ENCODE measurements at regions of chr17 and their contacts with region 1.

Region 1: GRCh38 chr17:64129764-64130558 is at the start of gene ERN1:
- DNase-seq: peak; percentile 93
- ATAC-seq: peak; percentile 94
- H3K4me3 Mint-ChIP-seq: peak within 1 kb of the TSS; percentile 92
- H3K27ac Mint-ChIP-seq: peak within 1 kb of the TSS; percentile 92
- H3K4me1 Mint-ChIP-seq: peaks cover 36% of the 10 kb centered on the region
- H3K27me3 Mint-ChIP-seq: no peaks in the 10 kb centered on the region
- total RNA-seq, gene ERN1: 13.0 to 17.9 TPM

Region 2: GRCh38 chr17:63881876-63882601 is 247.9 kb before region 1 on chr17 and contains the start of gene GH2:
- CTCF ChIA-PET with region 1: interaction called, 14 read pairs
- POLR2A ChIA-PET with region 1: no interaction called
- DNase-seq: peak; percentile 75
- ATAC-seq: peak; percentile 86
- H3K4me3 Mint-ChIP-seq: no peak within 1 kb of the TSS
- H3K27ac Mint-ChIP-seq: no peak within 1 kb of the TSS
- H3K4me1 Mint-ChIP-seq: peaks cover 6% of the 10 kb centered on the region
- H3K27me3 Mint-ChIP-seq: peaks cover 3% of the 10 kb centered on the region
- total RNA-seq, gene GH2: not detected

Region 3: GRCh38 chr17:63931099-63931561 is 198.8 kb before region 1 on chr17:
- CTCF ChIA-PET with region 1: interaction called, 13 read pairs
- POLR2A ChIA-PET with region 1: no interaction called
- DNase-seq: peak; percentile 75
- ATAC-seq: peak; percentile 80
- H3K4me3 Mint-ChIP-seq: peak overlapping the region; percentile 93
- H3K27ac Mint-ChIP-seq: peak overlapping the region; percentile 82
- H3K4me1 Mint-ChIP-seq: peaks cover 29% of the 10 kb centered on the region
- H3K27me3 Mint-ChIP-seq: peaks cover 10% of the 10 kb centered on the region

Region 4: GRCh38 chr17:64025732-64026294 is 104.1 kb before region 1 on chr17:
- CTCF ChIA-PET with region 1: interaction called, 645 read pairs
- POLR2A ChIA-PET with region 1: interaction called, 21 read pairs
- DNase-seq: peak; percentile 96
- ATAC-seq: peak; percentile 89
- H3K4me3 Mint-ChIP-seq: peak overlapping the region; percentile 63
- H3K27ac Mint-ChIP-seq: peak overlapping the region; percentile 86
- H3K4me1 Mint-ChIP-seq: peaks cover 69% of the 10 kb centered on the region
- H3K27me3 Mint-ChIP-seq: no peaks in the 10 kb centered on the region

Region 5: GRCh38 chr17:64063766-64064224 is 66.2 kb before region 1 on chr17:
- CTCF ChIA-PET with region 1: interaction called, 287 read pairs
- POLR2A ChIA-PET with region 1: interaction called, 16 read pairs
- DNase-seq: peak; percentile 71
- ATAC-seq: peak; percentile 64
- H3K4me3 Mint-ChIP-seq: no peak overlapping the region
- H3K27ac Mint-ChIP-seq: peak overlapping the region; percentile 1
- H3K4me1 Mint-ChIP-seq: peaks cover 71% of the 10 kb centered on the region
- H3K27me3 Mint-ChIP-seq: no peaks in the 10 kb centered on the region

Region 6: GRCh38 chr17:64103391-64104364 is 26.3 kb before region 1 on chr17:
- CTCF ChIA-PET with region 1: interaction called, 11 read pairs
- POLR2A ChIA-PET with region 1: interaction called, 4 read pairs
- DNase-seq: no peak
- ATAC-seq: no peak
- H3K4me3 Mint-ChIP-seq: no peak overlapping the region
- H3K27ac Mint-ChIP-seq: no peak overlapping the region
- H3K4me1 Mint-ChIP-seq: peaks cover 53% of the 10 kb centered on the region
- H3K27me3 Mint-ChIP-seq: no peaks in the 10 kb centered on the region

Region 7: GRCh38 chr17:64256913-64257807 is 127.2 kb after region 1 on chr17:
- CTCF ChIA-PET with region 1: no interaction called
- POLR2A ChIA-PET with region 1: no interaction called
- DNase-seq: no peak
- ATAC-seq: no peak
- H3K4me3 Mint-ChIP-seq: no peak overlapping the region
- H3K27ac Mint-ChIP-seq: no peak overlapping the region
- H3K4me1 Mint-ChIP-seq: peaks cover 16% of the 10 kb centered on the region
- H3K27me3 Mint-ChIP-seq: no peaks in the 10 kb centered on the region

Region 8: DNA sequence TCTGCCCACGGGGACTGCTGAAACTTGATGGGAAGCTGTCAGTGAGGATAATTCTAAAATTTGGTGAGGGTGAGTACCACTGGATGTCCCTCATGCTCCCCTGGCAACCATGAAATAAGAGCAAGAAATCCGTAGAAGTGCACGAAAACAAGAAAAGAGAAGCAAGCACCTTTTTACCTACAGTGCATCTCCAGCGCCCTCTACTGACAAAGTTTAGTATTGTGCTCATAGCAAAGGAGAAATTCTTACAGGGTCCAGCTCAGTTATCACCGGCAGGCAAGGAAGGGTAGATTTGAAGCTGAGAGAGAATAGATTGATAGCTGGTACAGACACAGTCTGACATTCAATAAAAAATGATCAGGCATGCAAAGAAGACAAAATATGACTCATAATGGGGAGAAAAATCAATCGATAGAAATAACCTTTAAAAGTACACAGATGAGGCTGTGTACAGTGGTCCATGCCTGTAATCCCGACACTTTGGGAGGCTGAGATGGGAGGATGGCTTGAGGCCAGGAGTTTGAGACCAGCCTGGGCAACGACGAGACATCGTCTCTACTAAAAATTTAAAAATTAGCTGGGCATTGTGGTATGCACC is 161.4 kb after region 1 on chr17:
- CTCF ChIA-PET with region 1: interaction called, 10 read pairs
- POLR2A ChIA-PET with region 1: no interaction called
- DNase-seq: peak; percentile 29
- ATAC-seq: no peak
- H3K4me3 Mint-ChIP-seq: no peak overlapping the region
- H3K27ac Mint-ChIP-seq: no peak overlapping the region
- H3K4me1 Mint-ChIP-seq: no peaks in the 10 kb centered on the region
- H3K27me3 Mint-ChIP-seq: peaks cover 3% of the 10 kb centered on the region

Region 9: DNA sequence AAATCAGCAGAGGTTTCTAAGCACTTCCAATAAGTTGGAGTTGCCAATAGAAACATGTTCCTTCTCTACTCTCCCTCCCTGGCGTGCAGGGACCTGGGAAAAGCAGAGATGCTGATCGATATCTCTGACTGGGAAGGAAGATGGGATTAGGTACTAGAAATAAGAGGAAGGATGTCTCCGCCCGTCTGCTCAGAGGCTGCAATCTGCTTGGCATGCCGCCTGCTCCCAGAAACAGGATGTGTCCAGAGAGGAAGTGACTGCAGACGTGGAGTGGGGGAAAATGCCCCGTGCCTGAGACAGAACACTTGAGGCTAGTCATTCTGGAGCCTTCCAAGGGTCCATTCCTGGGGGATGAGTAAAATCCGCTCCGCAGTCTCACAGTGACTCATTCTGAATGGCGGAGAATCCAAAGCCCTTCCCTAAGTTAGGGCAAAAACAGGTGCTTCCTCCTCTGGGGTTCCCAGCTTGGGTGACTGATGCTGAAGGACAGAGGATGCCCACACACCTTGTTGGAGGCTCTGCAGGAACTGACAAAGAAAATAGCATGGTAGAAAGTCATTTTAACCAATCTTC is 577.1 kb after region 1 on chr17:
- CTCF ChIA-PET with region 1: no interaction called
- POLR2A ChIA-PET with region 1: no interaction called
- DNase-seq: no peak
- ATAC-seq: no peak
- H3K4me3 Mint-ChIP-seq: no peak overlapping the region
- H3K27ac Mint-ChIP-seq: peak overlapping the region; percentile 8
- H3K4me1 Mint-ChIP-seq: peaks cover 56% of the 10 kb centered on the region
- H3K27me3 Mint-ChIP-seq: no peaks in the 10 kb centered on the region